ENCODE measurements at regions of chr9 and their contacts with region 1.

Region 1: GRCh38 chr9:113340017-113340699 is at the start of gene WDR31:
- H3K4me3 ChIP-seq: peak within 1 kb of the TSS; percentile 82
- H3K27ac ChIP-seq: peak within 1 kb of the TSS; percentile 57
- H3K4me1 ChIP-seq: 0 out of 2 replicates have a peak, but pooled peaks cover 4% of the 10 kb centered on the region
- CTCF ChIP-seq: 0 out of 2 replicates have a peak, but pooled peaks have one; percentile 18

Region 2: DNA sequence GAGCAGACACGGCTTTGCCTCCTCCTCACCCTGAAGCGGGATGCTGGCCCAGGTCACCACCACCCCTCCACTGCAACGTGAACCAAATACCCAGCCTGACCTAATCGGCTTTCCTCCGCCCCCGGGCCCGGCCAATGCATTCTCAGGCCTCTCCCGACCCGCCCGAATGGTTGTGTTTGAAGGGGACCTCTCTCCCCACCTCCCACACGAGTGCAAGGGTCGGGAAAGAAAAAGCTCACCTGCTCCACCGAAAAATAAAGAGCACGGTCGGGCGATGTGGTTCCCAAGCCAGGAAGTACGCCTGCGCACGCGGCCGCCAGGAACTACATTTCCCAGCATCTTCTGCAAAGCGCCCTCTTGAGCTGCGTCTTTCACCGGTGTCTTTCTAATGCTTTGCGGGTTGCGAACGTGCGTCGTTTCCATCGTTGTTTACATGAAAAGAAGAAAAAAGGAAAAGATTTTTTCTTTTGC is 328.2 kb before region 1 on chr9 and contains the start of gene ZNF883:
- CTCF ChIA-PET with region 1: no interaction called
- POLR2A ChIA-PET with region 1: no interaction called
- H3K4me3 ChIP-seq: peak within 1 kb of the TSS; percentile 34
- H3K27ac ChIP-seq: no peak within 1 kb of the TSS
- H3K4me1 ChIP-seq: no peaks in the 10 kb centered on the region
- CTCF ChIP-seq: no peak

Region 3: DNA sequence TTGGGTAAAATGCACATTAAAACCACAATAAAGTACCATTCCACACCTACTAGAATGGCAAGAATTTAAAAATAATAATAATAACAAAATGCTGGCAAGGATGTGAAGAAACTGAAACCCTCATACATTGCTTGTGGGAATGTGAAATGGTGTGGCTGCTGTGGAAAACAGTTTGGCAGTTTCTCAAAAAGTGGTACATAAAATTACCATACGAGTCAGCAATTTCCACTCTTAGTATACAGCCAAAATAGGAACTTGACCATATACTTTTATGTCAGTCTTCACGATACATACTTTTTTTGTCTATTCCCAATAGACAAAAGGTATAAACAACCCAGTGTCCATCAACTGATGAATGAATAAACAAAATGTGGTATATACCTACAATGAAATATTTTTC is 134.7 kb before region 1 on chr9:
- CTCF ChIA-PET with region 1: no interaction called
- POLR2A ChIA-PET with region 1: no interaction called
- H3K4me3 ChIP-seq: no peak overlapping the region
- H3K27ac ChIP-seq: no peak overlapping the region
- H3K4me1 ChIP-seq: no peaks in the 10 kb centered on the region
- CTCF ChIP-seq: no peak

Region 4: GRCh38 chr9:113364951-113365350 is 24.8 kb after region 1 on chr9:
- CTCF ChIA-PET with region 1: no interaction called
- POLR2A ChIA-PET with region 1: interaction called, 10 read pairs
- H3K4me3 ChIP-seq: no peak overlapping the region
- H3K27ac ChIP-seq: no peak overlapping the region
- H3K4me1 ChIP-seq: no peaks in the 10 kb centered on the region
- CTCF ChIP-seq: no peak

Region 5: GRCh38 chr9:113376634-113377567 is 36.7 kb after region 1 on chr9 and contains the start of gene HDHD3:
- CTCF ChIA-PET with region 1: interaction called, 4 read pairs
- POLR2A ChIA-PET with region 1: interaction called, 20 read pairs
- H3K4me3 ChIP-seq: peak within 1 kb of the TSS; percentile 64
- H3K27ac ChIP-seq: peak within 1 kb of the TSS; percentile 81
- H3K4me1 ChIP-seq: peaks cover 3% of the 10 kb centered on the region; the same call in 1 of the 2 replicates
- CTCF ChIP-seq: no peak